ENCODE measurements at regions of chr1 and their contacts with region 1.

Region 1: GRCh38 chr1:50348449-50349241 is 74.6 kb downstream of the DMRTA2 start:
- DNase-seq: peak; percentile 63
- H3K4me3 ChIP-seq: no peak overlapping the region
- H3K27ac ChIP-seq: no peak overlapping the region
- H3K4me1 ChIP-seq: peaks cover 3% of the 10 kb centered on the region
- H3K27me3 ChIP-seq: no peaks in the 10 kb centered on the region
- CTCF ChIP-seq: peak; percentile 79 to 82
- POLR2A ChIP-seq: no peak

Region 2: GRCh38 chr1:48572646-48573261 is 1775.9 kb before region 1 on chr1:
- CTCF ChIA-PET with region 1: no interaction called
- POLR2A ChIA-PET with region 1: no interaction called
- dilution Hi-C with region 1: no loop called
- intact Hi-C with region 1: loop called (anchors 1 kb)
- DNase-seq: peak; percentile 7
- H3K4me3 ChIP-seq: no peak overlapping the region
- H3K27ac ChIP-seq: no peak overlapping the region
- H3K4me1 ChIP-seq: no peaks in the 10 kb centered on the region
- H3K27me3 ChIP-seq: no peaks in the 10 kb centered on the region
- CTCF ChIP-seq: peak in 1 of 2 donors; percentile 29
- POLR2A ChIP-seq: no peak

Region 3: GRCh38 chr1:48677306-48678287 is 1671.0 kb before region 1 on chr1:
- CTCF ChIA-PET with region 1: interaction called, 62 read pairs
- POLR2A ChIA-PET with region 1: no interaction called
- dilution Hi-C with region 1: no loop called
- intact Hi-C with region 1: loop called (anchors 1 kb)
- DNase-seq: peak; percentile 43
- H3K4me3 ChIP-seq: no peak overlapping the region
- H3K27ac ChIP-seq: no peak overlapping the region
- H3K4me1 ChIP-seq: no peaks in the 10 kb centered on the region
- H3K27me3 ChIP-seq: no peaks in the 10 kb centered on the region
- CTCF ChIP-seq: peak; percentile 53 to 71
- POLR2A ChIP-seq: no peak

Region 4: GRCh38 chr1:48916130-48917069 is 1432.2 kb before region 1 on chr1:
- CTCF ChIA-PET with region 1: interaction called, 3 read pairs
- POLR2A ChIA-PET with region 1: no interaction called
- dilution Hi-C with region 1: no loop called
- intact Hi-C with region 1: loop called (anchors 1 kb)
- DNase-seq: peak; percentile 9
- H3K4me3 ChIP-seq: no peak overlapping the region
- H3K27ac ChIP-seq: no peak overlapping the region
- H3K4me1 ChIP-seq: no peaks in the 10 kb centered on the region
- H3K27me3 ChIP-seq: no peaks in the 10 kb centered on the region
- CTCF ChIP-seq: peak; percentile 24 to 36
- POLR2A ChIP-seq: no peak

Region 5: DNA sequence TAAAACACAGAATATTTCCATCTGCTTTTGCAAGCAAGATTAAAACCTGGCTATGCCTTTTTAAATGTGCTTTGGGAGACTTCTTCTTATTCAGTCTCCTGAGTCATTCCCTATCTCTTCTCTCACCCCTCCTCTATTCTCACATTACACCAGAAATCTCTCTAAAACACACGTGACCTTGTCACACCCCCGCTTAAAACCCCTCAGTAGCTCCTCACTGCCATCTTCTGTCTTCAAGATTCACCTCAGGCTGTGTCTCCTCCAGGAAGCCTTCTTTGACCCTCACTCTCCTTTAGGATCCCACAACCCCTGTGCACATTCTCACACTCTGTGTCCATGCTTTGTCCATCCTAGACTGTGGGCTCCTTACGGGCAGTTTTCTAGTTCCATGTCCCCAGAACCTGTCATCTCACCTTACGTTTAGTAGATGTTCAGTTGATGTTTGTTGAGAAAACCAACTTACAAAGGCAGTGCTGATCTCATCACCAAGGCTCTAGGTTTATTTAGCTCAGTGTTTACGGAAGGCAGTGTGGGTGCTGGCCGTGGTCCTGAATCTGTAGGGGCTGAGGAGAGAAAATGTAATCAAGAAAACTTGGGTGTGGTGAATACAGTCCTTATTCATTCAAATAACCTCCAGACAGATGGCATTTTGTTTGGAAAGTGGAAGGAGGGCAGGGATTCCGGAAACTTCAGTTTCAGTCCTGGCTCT is 68.9 kb before region 1 on chr1:
- CTCF ChIA-PET with region 1: no interaction called
- POLR2A ChIA-PET with region 1: no interaction called
- dilution Hi-C with region 1: no loop called
- intact Hi-C with region 1: no loop called
- DNase-seq: peak; percentile 2
- H3K4me3 ChIP-seq: no peak overlapping the region
- H3K27ac ChIP-seq: no peak overlapping the region
- H3K4me1 ChIP-seq: no peaks in the 10 kb centered on the region
- H3K27me3 ChIP-seq: no peaks in the 10 kb centered on the region
- CTCF ChIP-seq: no peak
- POLR2A ChIP-seq: no peak